Endothelial cell of umbilical vein (primary cell): ENCODE measurements at regions of chr14 and their contacts with region 1.

Region 1: GRCh38 chr14:48398675-48399282 is 723.4 kb upstream of the MDGA2 start:
- DNase-seq: peak; percentile 19
- H3K4me3 ChIP-seq: no peak overlapping the region
- H3K27ac ChIP-seq: no peak overlapping the region
- H3K4me1 ChIP-seq: no peaks in the 10 kb centered on the region
- H3K27me3 ChIP-seq: no peaks in the 10 kb centered on the region
- CTCF ChIP-seq: peak; percentile 38 to 52
- POLR2A ChIP-seq: no peak

Region 2: GRCh38 chr14:47917345-47917954 is 481.3 kb before region 1 on chr14:
- CTCF ChIA-PET with region 1: no interaction called
- POLR2A ChIA-PET with region 1: no interaction called
- dilution Hi-C with region 1: no loop called
- intact Hi-C with region 1: loop called (anchors 1 kb)
- DNase-seq: peak; percentile 33
- H3K4me3 ChIP-seq: no peak overlapping the region
- H3K27ac ChIP-seq: no peak overlapping the region
- H3K4me1 ChIP-seq: no peaks in the 10 kb centered on the region
- H3K27me3 ChIP-seq: no peaks in the 10 kb centered on the region
- CTCF ChIP-seq: peak; percentile 21 to 35
- POLR2A ChIP-seq: no peak

Region 3: GRCh38 chr14:48261436-48261835 is 137.3 kb before region 1 on chr14:
- CTCF ChIA-PET with region 1: no interaction called
- POLR2A ChIA-PET with region 1: no interaction called
- dilution Hi-C with region 1: no loop called
- intact Hi-C with region 1: no loop called
- DNase-seq: no peak
- H3K4me3 ChIP-seq: no peak overlapping the region
- H3K27ac ChIP-seq: no peak overlapping the region
- H3K4me1 ChIP-seq: no peaks in the 10 kb centered on the region
- H3K27me3 ChIP-seq: no peaks in the 10 kb centered on the region
- CTCF ChIP-seq: no peak
- POLR2A ChIP-seq: no peak